ENCODE measurements at regions of chr19 and their contacts with region 1.

Region 1: DNA sequence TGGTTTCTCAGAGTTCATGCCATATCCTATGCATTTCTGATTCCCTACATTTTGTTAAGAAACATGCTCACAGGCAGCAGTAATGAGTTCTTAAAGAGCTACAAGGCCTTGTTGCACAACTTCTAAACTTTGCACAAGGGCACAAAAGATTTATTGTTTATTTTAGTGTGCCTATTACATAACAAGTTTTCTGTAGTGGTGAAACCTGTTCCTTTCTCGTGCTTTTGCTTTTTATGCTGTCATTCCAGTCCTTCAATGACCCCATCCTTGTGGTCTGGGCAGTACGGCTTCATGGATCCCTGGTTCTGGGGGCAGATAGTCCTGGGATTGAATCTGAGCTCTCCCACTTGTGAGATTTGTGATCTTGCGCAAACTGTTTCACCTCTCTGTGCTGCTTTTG is 17.8 kb downstream of the ZNF507 start:
- H3K4me3 ChIP-seq: no peak overlapping the region
- H3K27ac ChIP-seq: peak overlapping the region; percentile 21; the same call in 1 of the 2 replicates
- H3K4me1 ChIP-seq: peaks cover 3% of the 10 kb centered on the region; the same call in 1 of the 2 replicates
- CTCF ChIP-seq: no peak

Region 2: GRCh38 chr19:32373585-32374295 is 10.5 kb after region 1 on chr19:
- CTCF ChIA-PET with region 1: interaction called, 18 read pairs
- POLR2A ChIA-PET with region 1: no interaction called
- H3K4me3 ChIP-seq: no peak overlapping the region
- H3K27ac ChIP-seq: peak overlapping the region; percentile 47
- H3K4me1 ChIP-seq: peaks cover 18% of the 10 kb centered on the region
- CTCF ChIP-seq: no peak

Region 3: DNA sequence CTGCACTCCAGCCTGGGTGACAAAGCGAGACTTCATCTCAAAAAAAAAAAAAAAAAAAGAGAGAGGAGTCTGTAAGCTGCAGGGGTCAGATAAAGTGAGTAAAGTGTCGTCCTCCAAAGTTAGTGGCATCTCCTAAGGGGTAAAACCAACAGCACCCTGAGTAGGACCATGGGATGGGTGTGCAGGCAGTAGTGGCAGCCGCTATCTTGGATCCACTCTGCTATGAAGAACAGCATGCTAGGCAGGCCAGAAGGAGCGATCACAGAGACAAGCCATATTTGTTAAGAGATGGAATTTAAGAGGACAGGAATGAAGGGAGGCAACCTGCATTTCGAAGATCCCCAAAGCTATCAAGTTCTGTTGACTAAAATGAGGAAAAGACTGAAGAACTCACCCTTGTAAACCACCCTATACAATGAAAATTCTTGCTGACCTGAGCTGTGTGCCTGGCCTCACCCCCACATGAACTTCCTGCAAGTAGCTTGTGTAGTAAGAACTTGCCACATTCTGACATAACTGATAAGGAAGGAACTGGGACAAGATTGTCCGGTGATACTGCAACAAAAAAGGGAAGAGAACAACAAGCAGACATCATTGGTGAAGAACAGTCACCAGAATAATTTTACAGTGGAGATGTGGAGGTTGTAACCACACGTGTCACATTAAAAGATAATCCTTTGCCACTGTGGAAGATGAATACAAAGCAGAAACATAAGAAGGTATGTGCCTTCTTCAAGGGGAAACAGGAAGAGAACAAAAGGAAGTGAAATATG is 58.6 kb after region 1 on chr19:
- CTCF ChIA-PET with region 1: no interaction called
- POLR2A ChIA-PET with region 1: no interaction called
- H3K4me3 ChIP-seq: no peak overlapping the region
- H3K27ac ChIP-seq: no peak overlapping the region
- H3K4me1 ChIP-seq: no peaks in the 10 kb centered on the region
- CTCF ChIP-seq: no peak